ENCODE measurements at regions of chr10 and their contacts with region 1.

Region 1: GRCh38 chr10:29998142-29998808 is 61.1 kb downstream of the JCAD start:
- DNase-seq: peak; percentile 70 to 83
- ATAC-seq: peak; percentile 39 to 52 (median 45)
- H3K4me3 ChIP-seq: no peak overlapping the region
- H3K27ac ChIP-seq: no peak overlapping the region
- H3K4me1 ChIP-seq: peaks cover 62% of the 10 kb centered on the region
- H3K27me3 ChIP-seq: no peaks in the 10 kb centered on the region
- CTCF ChIP-seq: peak; percentile 95

Region 2: GRCh38 chr10:29897999-29898716 is 100.1 kb before region 1 on chr10:
- intact Hi-C with region 1: no loop called
- DNase-seq: no peak
- ATAC-seq: no peak
- H3K4me3 ChIP-seq: no peak overlapping the region
- H3K27ac ChIP-seq: no peak overlapping the region
- H3K4me1 ChIP-seq: no peaks in the 10 kb centered on the region
- H3K27me3 ChIP-seq: no peaks in the 10 kb centered on the region
- CTCF ChIP-seq: no peak

Region 3: GRCh38 chr10:29926693-29927048 is 71.6 kb before region 1 on chr10:
- intact Hi-C with region 1: loop called in 1 of 2 experiments (anchors 5 kb)
- DNase-seq: no peak
- ATAC-seq: peak in 2 of 4 donors; percentile 76 to 81
- H3K4me3 ChIP-seq: no peak overlapping the region
- H3K27ac ChIP-seq: no peak overlapping the region
- H3K4me1 ChIP-seq: no peaks in the 10 kb centered on the region
- H3K27me3 ChIP-seq: no peaks in the 10 kb centered on the region
- CTCF ChIP-seq: peak; percentile 26

Region 4: GRCh38 chr10:29969255-29970011 is 28.8 kb before region 1 on chr10:
- intact Hi-C with region 1: loop called in 1 of 2 experiments (anchors 2 kb)
- DNase-seq: peak; percentile 60 to 86
- ATAC-seq: peak; percentile 95 to 97 (median 96)
- H3K4me3 ChIP-seq: no peak overlapping the region
- H3K27ac ChIP-seq: peak overlapping the region; percentile 77
- H3K4me1 ChIP-seq: peaks cover 26% of the 10 kb centered on the region
- H3K27me3 ChIP-seq: no peaks in the 10 kb centered on the region
- CTCF ChIP-seq: no peak

Region 5: DNA sequence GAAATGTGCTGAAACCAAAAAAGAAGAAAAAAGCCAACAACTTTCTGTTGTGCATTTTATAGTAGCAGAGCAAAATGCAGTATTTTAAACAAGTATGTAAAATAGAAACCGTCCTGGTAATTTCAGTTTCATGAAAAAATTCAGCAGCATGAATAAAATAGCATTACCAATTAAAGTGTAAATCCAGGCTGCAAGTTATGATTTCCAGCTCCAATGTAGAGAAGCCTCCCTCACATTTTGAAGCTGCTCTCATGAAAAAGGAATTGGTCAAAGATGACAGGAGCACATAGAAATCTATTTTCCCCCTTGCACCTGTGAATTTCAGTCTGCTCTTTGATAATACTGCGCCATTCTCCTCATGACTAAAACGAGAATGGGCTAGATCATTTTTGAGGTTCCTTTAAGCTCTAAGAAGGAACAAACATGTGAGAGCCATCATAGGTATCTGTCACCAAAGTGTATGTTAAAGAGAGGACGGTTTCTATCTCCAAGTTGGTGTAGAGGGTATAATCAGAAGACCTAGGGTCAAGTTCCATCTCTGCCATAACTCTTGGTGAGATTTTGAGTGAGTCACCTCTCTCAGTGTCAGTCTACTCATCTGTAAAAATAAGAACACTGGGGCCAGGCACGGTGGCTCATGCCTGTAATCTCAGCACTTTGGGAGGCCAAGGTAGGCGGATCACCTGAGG is 243.3 kb after region 1 on chr10:
- intact Hi-C with region 1: loop called (anchors 1 to 5 kb)
- DNase-seq: no peak
- ATAC-seq: no peak
- H3K4me3 ChIP-seq: no peak overlapping the region
- H3K27ac ChIP-seq: no peak overlapping the region
- H3K4me1 ChIP-seq: peaks cover 3% of the 10 kb centered on the region
- H3K27me3 ChIP-seq: no peaks in the 10 kb centered on the region
- CTCF ChIP-seq: no peak

Region 6: GRCh38 chr10:30348378-30348776 is 350.1 kb after region 1 on chr10:
- intact Hi-C with region 1: loop called in 1 of 2 experiments (anchors 10 kb)
- DNase-seq: no peak
- ATAC-seq: peak in 2 of 4 donors; percentile 9 to 39
- H3K4me3 ChIP-seq: peak overlapping the region; percentile 85
- H3K27ac ChIP-seq: peak overlapping the region; percentile 86
- H3K4me1 ChIP-seq: peaks cover 38% of the 10 kb centered on the region
- H3K27me3 ChIP-seq: no peaks in the 10 kb centered on the region
- CTCF ChIP-seq: no peak

Measured in psoas muscle (tissue), 8 donors.